Psoas muscle (tissue), 8 donors: ENCODE measurements at regions of chrX and their contacts with region 1.

Region 1: DNA sequence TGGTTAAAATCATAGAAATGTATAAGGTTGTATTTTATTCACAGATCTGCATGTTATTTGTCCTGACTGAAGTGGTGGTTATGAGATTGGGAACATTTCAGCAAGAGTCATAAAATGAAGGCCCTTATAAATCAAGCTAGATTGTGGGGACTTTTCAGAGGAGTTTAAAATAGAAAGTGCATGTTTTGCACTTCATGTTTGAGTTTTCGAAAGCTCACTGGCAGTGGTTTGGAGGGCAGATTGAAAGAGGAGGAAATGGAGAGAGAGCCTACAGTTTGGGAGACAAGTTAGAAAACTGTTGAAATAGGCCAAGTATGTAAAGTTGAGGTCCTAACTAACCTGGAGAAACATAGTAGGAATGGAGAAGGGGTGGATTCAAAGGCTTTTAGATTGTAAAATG is 124.9 kb downstream of the KDM6A start:
- DNase-seq: no peak
- ATAC-seq: peak in 1 of 4 donors; percentile 17
- H3K4me3 ChIP-seq: no peak overlapping the region
- H3K27ac ChIP-seq: no peak overlapping the region
- H3K4me1 ChIP-seq: peaks cover 25% of the 10 kb centered on the region
- H3K27me3 ChIP-seq: no peaks in the 10 kb centered on the region
- CTCF ChIP-seq: no peak

Region 2: GRCh38 chrX:44637282-44637681 is 360.6 kb before region 1 on chrX:
- intact Hi-C with region 1: no loop called
- DNase-seq: no peak
- ATAC-seq: no peak
- H3K4me3 ChIP-seq: no peak overlapping the region
- H3K27ac ChIP-seq: no peak overlapping the region
- H3K4me1 ChIP-seq: no peaks in the 10 kb centered on the region
- H3K27me3 ChIP-seq: no peaks in the 10 kb centered on the region
- CTCF ChIP-seq: no peak

Region 3: DNA sequence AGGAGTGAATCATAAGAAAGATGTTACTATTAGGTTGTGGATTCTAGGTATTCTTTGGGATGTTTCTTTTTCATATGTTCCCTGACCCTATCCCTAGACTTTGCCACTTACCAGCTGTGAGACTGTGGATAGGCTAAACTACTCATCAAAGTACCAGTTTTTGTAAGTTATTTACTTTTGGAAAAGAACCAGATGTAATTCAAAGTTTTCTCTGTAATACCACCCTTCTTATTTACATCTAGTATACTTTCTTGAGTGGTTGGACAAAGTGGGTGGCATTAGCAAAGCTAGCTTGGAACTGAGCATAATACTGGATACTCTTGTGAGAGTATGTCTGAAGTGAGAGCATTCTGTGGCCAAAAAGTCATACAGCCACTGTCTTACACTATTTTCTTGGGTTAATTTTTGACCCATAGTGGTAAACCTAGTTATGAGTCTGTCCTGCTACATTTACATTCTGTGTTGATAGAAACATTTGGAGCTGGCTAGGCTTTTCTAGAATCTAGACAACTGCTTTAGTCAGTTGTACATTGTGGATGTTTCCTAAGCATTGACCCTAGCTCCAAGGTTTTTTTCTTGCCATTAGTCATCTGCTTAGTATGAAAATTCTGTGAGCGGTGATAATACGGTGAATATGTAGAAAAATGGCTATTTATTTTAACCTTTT is 83.2 kb before region 1 on chrX:
- intact Hi-C with region 1: no loop called
- DNase-seq: no peak
- ATAC-seq: peak in 2 of 4 donors; percentile 22 to 56
- H3K4me3 ChIP-seq: no peak overlapping the region
- H3K27ac ChIP-seq: no peak overlapping the region
- H3K4me1 ChIP-seq: peaks cover 47% of the 10 kb centered on the region
- H3K27me3 ChIP-seq: no peaks in the 10 kb centered on the region
- CTCF ChIP-seq: no peak

Region 4: DNA sequence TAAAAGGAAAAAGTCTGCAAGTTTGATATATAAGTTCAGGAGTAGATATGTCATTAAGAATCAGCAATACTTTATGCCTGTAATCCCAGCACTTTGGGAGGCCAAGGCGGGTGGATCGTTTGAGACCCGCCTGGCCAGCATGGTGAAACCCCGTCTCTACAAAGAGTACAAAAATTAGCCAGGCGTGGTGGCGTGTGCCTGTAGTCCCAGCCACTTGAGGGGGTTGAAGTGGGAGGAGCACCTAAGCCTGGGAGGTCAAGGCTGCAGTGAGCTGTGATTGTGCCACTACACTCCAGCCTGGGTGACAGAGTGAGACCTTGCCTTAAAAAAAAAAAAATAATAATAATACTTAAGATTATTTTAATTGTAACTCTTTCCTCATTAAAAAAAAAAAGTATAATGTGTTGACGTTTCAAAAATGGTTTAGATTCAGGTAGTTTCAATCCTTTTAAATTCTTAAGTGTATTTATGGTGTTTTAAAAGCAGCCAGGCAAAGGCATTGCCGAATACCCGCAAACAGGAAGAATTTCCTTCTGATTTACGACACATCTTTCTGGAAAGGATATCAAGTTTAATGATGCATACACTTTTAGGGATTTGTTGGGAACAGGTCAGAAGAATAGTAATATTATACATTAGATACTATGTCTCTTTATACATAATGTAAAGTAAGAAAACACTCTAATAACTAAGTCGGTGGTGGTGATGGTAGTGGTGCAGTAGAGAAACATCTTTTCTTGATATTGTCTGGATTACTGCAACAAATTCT is 44.0 kb before region 1 on chrX:
- intact Hi-C with region 1: loop called in 1 of 2 experiments (anchors 5 kb)
- DNase-seq: no peak
- ATAC-seq: peak in 2 of 4 donors; percentile 31 to 43
- H3K4me3 ChIP-seq: no peak overlapping the region
- H3K27ac ChIP-seq: no peak overlapping the region
- H3K4me1 ChIP-seq: peaks cover 62% of the 10 kb centered on the region
- H3K27me3 ChIP-seq: no peaks in the 10 kb centered on the region
- CTCF ChIP-seq: no peak

Region 5: GRCh38 chrX:45372151-45372550 is 374.3 kb after region 1 on chrX:
- intact Hi-C with region 1: no loop called
- DNase-seq: no peak
- ATAC-seq: no peak
- H3K4me3 ChIP-seq: no peak overlapping the region
- H3K27ac ChIP-seq: no peak overlapping the region
- H3K4me1 ChIP-seq: no peaks in the 10 kb centered on the region
- H3K27me3 ChIP-seq: no peaks in the 10 kb centered on the region
- CTCF ChIP-seq: no peak